Activated T-helper 1 cell treated with anti-CD3 and anti-CD28 coated beads, Interleukin-12 subunit alpha, Interleukin-12 subunit beta, Interleukin-2, Interleukin-4 antibody, amounts not matched to agents 30 ng/mL and 10 ng/mL and 1 ng/mL, durations not matched to agents 14 hours and 24 hours and 36 hours (primary cell): ENCODE measurements at regions of chr2 and their contacts with region 1.

Region 1: DNA sequence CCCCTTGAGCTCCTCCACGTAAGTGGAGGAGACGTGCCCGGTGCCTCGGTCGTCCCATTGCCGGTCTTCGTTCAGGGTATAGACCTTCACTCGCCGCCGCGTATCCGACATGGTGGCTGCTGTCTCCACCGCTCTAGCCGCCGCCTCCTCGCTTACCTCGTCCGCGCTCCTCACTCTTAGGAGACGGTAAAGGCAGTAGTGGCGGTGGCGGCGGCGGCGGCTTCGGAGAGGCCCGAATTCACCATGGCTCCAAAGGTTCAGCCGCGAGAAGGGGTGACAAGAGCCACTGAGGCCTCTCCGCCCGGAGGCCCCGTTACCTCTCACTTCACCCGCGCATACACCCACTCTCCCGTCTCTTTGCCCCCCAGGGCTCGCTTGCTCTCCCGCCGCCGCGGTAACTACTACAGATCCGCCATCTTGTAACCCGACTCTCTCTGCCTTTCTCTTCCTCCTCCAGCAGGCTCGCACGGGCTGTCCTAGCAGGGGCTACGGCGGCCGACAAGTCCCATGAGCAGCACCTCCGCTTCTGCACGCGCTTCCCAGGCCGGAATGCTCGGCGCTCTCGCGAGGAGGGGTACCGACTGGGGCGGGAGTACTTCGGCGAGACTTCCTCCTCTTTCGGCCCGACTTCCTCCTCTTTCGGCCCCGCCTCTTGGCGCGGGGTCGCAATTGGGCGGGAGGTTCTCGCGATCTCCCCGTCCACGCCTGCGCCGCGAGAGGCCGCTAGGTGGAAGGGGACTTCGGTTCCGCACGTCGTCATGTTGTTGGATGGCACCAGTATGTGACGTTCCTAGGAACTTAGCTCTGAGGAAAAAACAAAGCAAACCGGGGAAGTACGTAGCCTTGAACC is at the start of gene PPP4R3B:
- DNase-seq: peak; percentile 99
- H3K4me3 Mint-ChIP-seq: no peak within 1 kb of the TSS
- H3K27ac Mint-ChIP-seq: no peak within 1 kb of the TSS
- H3K4me1 Mint-ChIP-seq: peaks cover 38% of the 10 kb centered on the region
- H3K27me3 Mint-ChIP-seq: no peaks in the 10 kb centered on the region
- total RNA-seq, gene PPP4R3B: 69.8 and 74.6 TPM in 2 replicates

Region 2: GRCh38 chr2:53767405-53768241 is 1849.8 kb before region 1 on chr2 and contains the start of gene CHAC2:
- intact Hi-C with region 1: loop called (anchors 1 kb)
- DNase-seq: peak; percentile 82
- H3K4me3 Mint-ChIP-seq: peak within 1 kb of the TSS; percentile 96
- H3K27ac Mint-ChIP-seq: peak within 1 kb of the TSS; percentile 97
- H3K4me1 Mint-ChIP-seq: peaks cover 38% of the 10 kb centered on the region
- H3K27me3 Mint-ChIP-seq: no peaks in the 10 kb centered on the region
- total RNA-seq, gene CHAC2: 24.1 and 25.6 TPM in 2 replicates

Region 3: DNA sequence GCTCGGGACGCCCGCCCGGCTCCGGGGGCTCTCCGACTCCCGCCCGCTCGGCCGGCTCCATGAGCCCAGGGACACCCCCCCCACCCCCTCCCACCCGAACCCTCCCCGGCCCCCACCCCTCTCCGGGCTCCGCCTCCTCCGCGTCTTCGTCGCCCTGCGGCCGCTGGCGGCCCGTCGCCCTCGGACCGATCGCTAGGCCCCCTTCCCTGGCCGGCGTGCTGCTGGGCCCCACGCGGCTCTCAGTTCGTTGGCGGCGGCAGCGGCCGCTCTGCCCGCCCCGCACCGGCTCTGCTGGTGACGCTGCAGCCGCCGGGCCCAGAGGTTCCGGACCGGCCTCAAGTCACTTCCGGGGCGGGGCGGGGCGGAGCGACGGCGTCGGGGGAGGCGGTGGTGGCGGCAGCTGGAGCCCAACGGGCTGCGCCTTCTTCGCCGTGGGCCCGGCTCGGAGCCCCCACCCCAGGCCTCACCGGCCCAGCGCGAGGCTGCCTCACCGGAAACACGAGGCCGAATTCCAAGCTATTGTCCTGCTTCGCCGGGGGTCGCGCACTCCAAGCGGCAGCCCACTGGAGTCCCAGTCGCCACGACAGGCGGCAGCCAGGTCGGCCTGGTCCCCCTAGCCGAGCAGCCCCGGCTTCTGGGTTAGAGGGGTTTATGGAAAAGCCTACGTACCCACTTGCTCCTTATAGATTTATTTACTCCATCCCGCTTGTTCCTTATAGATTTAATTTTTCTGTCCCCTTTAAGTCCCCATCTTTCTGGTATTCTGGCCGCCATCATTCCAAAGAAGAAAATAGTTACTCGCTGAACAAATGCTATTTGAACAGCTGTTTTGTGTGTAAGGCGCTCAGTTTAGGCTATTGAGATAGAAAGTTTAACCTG is 1646.4 kb before region 1 on chr2 and contains the start of gene PSME4:
- intact Hi-C with region 1: loop called (anchors 2 kb)
- DNase-seq: peak; percentile 91
- H3K4me3 Mint-ChIP-seq: peak within 1 kb of the TSS; percentile 99
- H3K27ac Mint-ChIP-seq: peak within 1 kb of the TSS; percentile 99
- H3K4me1 Mint-ChIP-seq: peaks cover 39% of the 10 kb centered on the region
- H3K27me3 Mint-ChIP-seq: no peaks in the 10 kb centered on the region
- total RNA-seq, gene PSME4: 59.3 and 59.7 TPM in 2 replicates

Region 4: GRCh38 chr2:54570925-54571694 is 1046.3 kb before region 1 on chr2:
- intact Hi-C with region 1: loop called (anchors 10 kb)
- DNase-seq: peak; percentile 84
- H3K4me3 Mint-ChIP-seq: peak overlapping the region; percentile 70
- H3K27ac Mint-ChIP-seq: peak overlapping the region; percentile 92
- H3K4me1 Mint-ChIP-seq: peaks cover 91% of the 10 kb centered on the region
- H3K27me3 Mint-ChIP-seq: peaks cover 2% of the 10 kb centered on the region

Region 5: DNA sequence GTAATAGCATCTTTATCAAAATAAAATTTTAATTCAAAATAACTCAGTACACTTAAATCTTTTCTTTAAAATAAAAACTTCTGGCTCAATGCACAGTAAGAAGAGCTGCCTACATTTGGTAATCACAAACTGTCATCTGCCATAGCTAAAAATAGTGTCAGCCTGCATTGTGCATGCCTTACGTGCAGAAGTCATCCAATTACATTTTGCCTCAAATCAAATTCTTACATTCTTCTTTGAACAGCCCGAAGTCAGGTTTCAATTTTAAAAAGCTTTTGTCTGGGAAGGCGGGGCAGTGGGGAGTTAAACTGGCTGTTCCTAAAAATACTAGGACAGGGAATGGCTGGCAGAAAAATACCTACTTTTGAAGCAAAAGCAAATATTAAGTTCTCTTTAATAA is 618.2 kb before region 1 on chr2:
- intact Hi-C with region 1: no loop called
- DNase-seq: no peak
- H3K4me3 Mint-ChIP-seq: no peak overlapping the region
- H3K27ac Mint-ChIP-seq: no peak overlapping the region
- H3K4me1 Mint-ChIP-seq: peaks cover 21% of the 10 kb centered on the region
- H3K27me3 Mint-ChIP-seq: no peaks in the 10 kb centered on the region

Region 6: GRCh38 chr2:55268907-55269644 is 348.3 kb before region 1 on chr2 and contains the start of gene MTIF2:
- intact Hi-C with region 1: loop called (anchors 1 kb)
- DNase-seq: peak; percentile 87
- H3K4me3 Mint-ChIP-seq: peak within 1 kb of the TSS; percentile 93
- H3K27ac Mint-ChIP-seq: peak within 1 kb of the TSS; percentile 85
- H3K4me1 Mint-ChIP-seq: peaks cover 14% of the 10 kb centered on the region
- H3K27me3 Mint-ChIP-seq: no peaks in the 10 kb centered on the region
- total RNA-seq, gene MTIF2: 42.3 and 44.1 TPM in 2 replicates

Region 7: GRCh38 chr2:55419679-55420438 is 197.5 kb before region 1 on chr2 and contains the start of gene CCDC88A:
- intact Hi-C with region 1: loop called (anchors 2 kb)
- DNase-seq: peak; percentile 78
- H3K4me3 Mint-ChIP-seq: peak within 1 kb of the TSS; percentile 89
- H3K27ac Mint-ChIP-seq: peak within 1 kb of the TSS; percentile 50
- H3K4me1 Mint-ChIP-seq: peaks cover 23% of the 10 kb centered on the region
- H3K27me3 Mint-ChIP-seq: peaks cover 25% of the 10 kb centered on the region
- total RNA-seq, gene CCDC88A: 6.4 and 8.4 TPM in 2 replicates

Region 8: GRCh38 chr2:55590810-55591440 is 26.5 kb before region 1 on chr2:
- intact Hi-C with region 1: loop called (anchors 1 kb)
- DNase-seq: no peak
- H3K4me3 Mint-ChIP-seq: no peak overlapping the region
- H3K27ac Mint-ChIP-seq: peak overlapping the region; percentile 67
- H3K4me1 Mint-ChIP-seq: peaks cover 21% of the 10 kb centered on the region
- H3K27me3 Mint-ChIP-seq: no peaks in the 10 kb centered on the region

Region 9: DNA sequence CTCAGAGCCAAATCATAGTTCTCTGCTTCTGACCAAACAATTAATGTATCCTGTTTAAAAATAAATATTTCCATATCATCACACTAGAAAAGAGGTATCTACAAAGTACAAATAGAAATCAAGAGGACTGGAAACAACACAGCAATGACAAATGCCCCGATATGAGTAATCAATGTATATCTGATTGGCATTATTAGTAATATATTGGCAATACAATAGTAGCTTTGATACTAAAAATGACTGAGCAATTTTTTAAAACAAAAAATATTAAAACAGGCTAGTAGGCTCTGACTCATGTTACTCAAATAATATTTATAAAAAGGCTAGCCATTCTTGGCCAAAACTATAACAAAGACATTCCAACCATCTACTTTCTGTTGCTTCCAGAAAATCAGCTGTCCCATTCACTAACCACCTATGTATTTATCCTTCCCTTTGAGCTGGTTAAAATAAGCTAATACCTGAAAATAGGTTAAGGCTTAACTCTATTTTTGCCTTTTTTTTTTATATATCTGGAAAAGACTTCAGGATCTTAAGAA is 13.3 kb before region 1 on chr2:
- intact Hi-C with region 1: no loop called
- DNase-seq: no peak
- H3K4me3 Mint-ChIP-seq: no peak overlapping the region
- H3K27ac Mint-ChIP-seq: no peak overlapping the region
- H3K4me1 Mint-ChIP-seq: peaks cover 33% of the 10 kb centered on the region
- H3K27me3 Mint-ChIP-seq: no peaks in the 10 kb centered on the region

Region 10: DNA sequence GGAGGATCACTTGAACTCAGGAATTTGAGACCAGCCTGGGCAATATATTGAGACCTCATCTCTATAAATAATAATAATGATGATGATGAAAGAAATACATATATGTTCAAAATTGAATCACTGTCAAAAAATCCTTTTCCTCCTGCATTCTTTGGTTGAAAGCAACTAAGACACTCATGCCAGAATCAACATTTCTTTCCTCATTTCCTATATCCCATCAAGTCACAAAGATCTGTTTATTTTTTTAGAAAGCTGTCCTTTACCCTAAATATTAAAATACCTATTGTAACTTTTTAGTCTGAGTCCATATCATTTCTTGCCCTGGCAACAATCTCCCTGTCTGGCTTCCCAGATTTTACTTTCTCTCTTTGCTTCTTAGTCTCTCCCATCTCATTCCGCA is 31.8 kb after region 1 on chr2:
- intact Hi-C with region 1: no loop called
- DNase-seq: no peak
- H3K4me3 Mint-ChIP-seq: no peak overlapping the region
- H3K27ac Mint-ChIP-seq: no peak overlapping the region
- H3K4me1 Mint-ChIP-seq: no peaks in the 10 kb centered on the region
- H3K27me3 Mint-ChIP-seq: no peaks in the 10 kb centered on the region